CD4-positive, alpha-beta memory T cell (primary cell): ENCODE measurements at regions of chr15 and their contacts with region 1.

Region 1: DNA sequence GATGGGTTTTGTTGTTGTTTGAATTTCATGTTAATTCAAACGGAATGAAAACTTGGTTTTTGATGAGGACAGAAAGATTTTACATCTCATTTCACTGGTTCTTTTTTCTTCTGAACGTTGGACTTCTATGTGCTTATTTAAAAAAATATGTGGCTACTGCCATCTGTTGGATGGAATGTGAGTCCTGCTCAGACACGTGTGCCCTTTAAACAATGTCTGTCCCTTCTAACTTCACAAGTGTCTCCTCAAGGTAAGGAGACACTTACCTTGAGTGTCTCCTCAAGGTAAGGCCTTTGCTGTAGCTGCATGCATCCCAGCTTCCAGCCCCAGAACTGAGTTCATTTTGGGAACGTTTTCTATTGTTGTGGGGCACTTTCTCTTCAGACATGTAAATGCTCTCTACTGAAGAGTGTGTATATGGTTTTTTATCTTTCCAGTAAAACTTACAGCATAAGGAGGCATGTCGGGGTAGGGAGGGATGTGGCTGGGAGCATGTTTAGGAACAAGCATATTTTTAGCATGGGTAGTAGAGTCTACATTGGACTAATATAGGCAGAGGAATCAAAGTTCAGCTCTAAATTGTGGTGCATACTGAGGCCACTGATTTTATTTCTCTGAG is 63.1 kb upstream of the UBE3A start:
- DNase-seq: peak in 3 of 5 donors; percentile 14 to 23 (median 18)
- H3K4me3 ChIP-seq: no peak overlapping the region
- H3K4me3 Mint-ChIP-seq: no peak overlapping the region
- H3K27ac ChIP-seq: no peak overlapping the region
- H3K27ac Mint-ChIP-seq: peak overlapping the region in 1 of 7 donors; percentile 33
- H3K4me1 ChIP-seq: no peaks in the 10 kb centered on the region
- H3K4me1 Mint-ChIP-seq: no peaks in the 10 kb centered on the region
- H3K27me3 ChIP-seq: no peaks in the 10 kb centered on the region
- H3K27me3 Mint-ChIP-seq: peaks cover under 1 to 1% of the 10 kb centered on the region in 2 donors

Region 2: DNA sequence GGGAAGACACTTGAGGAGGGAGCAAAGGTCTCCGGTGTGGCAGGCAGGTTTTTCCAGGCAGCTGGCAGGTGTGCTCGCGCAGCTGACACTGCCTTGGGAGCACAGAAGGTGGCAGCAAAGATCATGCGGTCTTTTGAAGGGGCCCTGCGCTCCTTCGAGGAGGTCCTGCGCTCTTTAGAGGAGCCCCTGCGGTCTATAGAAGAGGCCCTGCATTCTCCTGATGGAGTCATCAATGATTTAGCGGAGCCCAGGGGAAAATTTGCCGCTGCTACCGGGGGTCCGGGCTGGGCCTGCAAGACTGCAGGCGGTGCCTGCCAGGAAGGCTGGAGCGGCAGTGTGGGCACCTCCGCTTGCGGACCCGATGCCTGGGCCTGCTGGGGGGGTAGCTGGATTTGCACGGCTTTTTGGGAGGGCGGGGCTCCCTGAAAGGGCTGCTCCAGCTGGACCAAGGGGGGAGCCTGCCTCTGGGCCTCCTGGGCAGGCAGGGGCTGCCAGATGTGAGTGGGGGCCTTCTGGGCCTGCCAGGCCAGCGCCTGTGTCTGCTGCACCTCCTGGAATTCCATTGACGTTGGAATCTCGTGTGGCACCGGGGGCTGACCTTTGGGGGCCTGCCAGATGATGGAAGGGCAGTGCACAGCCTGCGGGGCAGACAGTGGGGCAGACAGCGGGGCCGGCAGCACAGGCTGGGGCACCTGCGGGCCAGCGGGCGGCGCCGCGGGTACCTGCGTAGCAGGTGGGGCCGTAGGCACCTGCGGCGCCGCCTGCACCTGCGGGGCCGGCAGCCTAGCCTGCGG is 1856.4 kb before region 1 on chr15:
- CTCF ChIA-PET with region 1: interaction called, 17 read pairs
- POLR2A ChIA-PET with region 1: no interaction called
- intact Hi-C with region 1: no loop called
- DNase-seq: no peak
- H3K4me3 ChIP-seq: no peak overlapping the region
- H3K4me3 Mint-ChIP-seq: no peak overlapping the region
- H3K27ac ChIP-seq: no peak overlapping the region
- H3K27ac Mint-ChIP-seq: no peak overlapping the region
- H3K4me1 ChIP-seq: no peaks in the 10 kb centered on the region
- H3K4me1 Mint-ChIP-seq: no peaks in the 10 kb centered on the region
- H3K27me3 ChIP-seq: no peaks in the 10 kb centered on the region
- H3K27me3 Mint-ChIP-seq: peaks cover 2 to 4% of the 10 kb centered on the region in 2 donors

Region 3: DNA sequence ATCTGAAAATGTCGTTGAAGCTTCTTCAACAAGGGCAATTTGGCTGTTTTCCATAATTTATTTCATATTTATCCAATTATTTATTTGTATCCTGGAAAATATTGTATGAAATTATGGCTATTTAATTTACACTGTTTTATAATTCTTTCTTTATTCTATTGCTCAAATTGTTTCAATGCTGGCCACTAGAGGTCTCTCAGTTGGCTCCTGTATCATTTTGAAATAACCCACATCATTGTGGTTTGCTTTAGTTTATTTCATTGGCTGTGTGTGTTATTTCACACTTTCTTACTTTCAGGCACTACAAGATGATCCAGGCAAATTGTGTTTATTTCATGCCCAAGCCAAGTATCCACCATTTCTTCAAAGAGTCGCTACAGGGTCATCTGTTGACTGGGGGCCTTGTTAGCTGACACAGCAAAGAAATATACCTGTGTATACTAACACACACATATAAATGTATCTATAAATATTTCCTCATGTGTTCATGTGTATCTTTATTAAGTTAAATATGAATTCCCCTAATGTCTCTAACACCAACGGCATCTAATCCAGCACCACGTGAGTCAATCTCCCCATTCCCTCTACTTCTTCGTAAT is 740.1 kb before region 1 on chr15:
- CTCF ChIA-PET with region 1: no interaction called
- POLR2A ChIA-PET with region 1: no interaction called
- intact Hi-C with region 1: loop called (anchors 5 kb)
- DNase-seq: no peak
- H3K4me3 ChIP-seq: no peak overlapping the region
- H3K4me3 Mint-ChIP-seq: no peak overlapping the region
- H3K27ac ChIP-seq: no peak overlapping the region
- H3K27ac Mint-ChIP-seq: no peak overlapping the region
- H3K4me1 ChIP-seq: no peaks in the 10 kb centered on the region
- H3K4me1 Mint-ChIP-seq: peaks cover 0 to 2% (median 0%) of the 10 kb centered on the region in 4 donors
- H3K27me3 ChIP-seq: no peaks in the 10 kb centered on the region
- H3K27me3 Mint-ChIP-seq: peaks cover 0 to 3% of the 10 kb centered on the region in 2 donors